Stomach (tissue), 19 donors: ENCODE measurements at regions of chr21 and their contacts with region 1.

Region 1: GRCh38 chr21:43758111-43758641 is 17.9 kb downstream of the CSTB start:
- DNase-seq: peak in 1 of 2 donors; percentile 55
- H3K4me3 ChIP-seq: peak overlapping the region in 3 of 4 donors; percentile 7 to 23 (median 23)
- H3K27ac ChIP-seq: peak overlapping the region in 4 of 5 donors; percentile 52 to 87 (median 73)
- H3K4me1 ChIP-seq: peaks cover 5 to 22% (median 14%) of the 10 kb centered on the region in 4 donors
- H3K27me3 ChIP-seq: no peaks in the 10 kb centered on the region
- CTCF ChIP-seq: no peak
- EP300 ChIP-seq: no peak
- POLR2A ChIP-seq: no peak

Region 2: DNA sequence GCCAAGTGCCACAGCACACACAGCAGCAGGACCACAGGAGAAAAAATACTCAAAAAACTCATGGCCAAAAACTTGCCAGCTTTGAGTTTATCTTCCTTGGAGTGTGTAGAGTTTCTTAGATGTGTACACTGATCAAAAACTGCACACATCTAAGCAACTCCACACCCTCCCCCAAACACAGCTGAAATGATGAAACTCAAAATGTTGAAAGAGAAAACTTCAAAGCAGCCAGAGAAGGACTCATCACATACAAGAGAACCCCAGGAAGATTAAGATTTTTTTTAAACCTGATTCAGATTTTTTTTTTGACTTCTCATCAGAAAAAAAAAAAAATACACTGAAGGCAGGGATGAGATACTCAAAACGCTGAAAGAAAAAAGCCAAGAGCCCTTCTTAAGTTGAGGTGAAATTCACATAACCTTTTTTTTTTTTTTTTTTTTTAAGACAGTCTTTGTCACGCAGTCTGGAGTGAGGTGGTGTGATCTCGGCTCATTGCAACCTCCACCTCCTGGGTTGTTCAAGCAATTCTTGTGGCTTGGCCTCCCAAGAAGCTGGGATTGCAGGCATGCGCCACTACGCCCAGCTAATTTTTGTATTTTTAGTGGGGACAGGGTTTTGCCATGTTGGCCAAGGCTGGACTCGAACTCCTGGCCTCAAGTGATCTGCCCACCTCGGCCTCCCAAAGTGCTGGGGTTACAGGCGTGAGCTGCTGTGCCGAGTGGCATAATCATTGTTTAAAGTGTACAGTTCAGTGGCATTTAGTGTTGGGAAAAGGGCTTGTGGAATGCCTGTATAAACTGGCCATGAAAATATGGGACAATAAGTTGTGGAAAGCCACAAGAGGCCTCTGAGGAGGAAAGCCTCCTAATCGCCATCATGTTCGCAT is 60.2 kb before region 1 on chr21:
- intact Hi-C with region 1: loop called (anchors 10 kb)
- DNase-seq: no peak
- H3K4me3 ChIP-seq: no peak overlapping the region
- H3K27ac ChIP-seq: no peak overlapping the region
- H3K4me1 ChIP-seq: peaks cover 0 to 15% (median 13%) of the 10 kb centered on the region in 4 donors
- H3K27me3 ChIP-seq: no peaks in the 10 kb centered on the region
- CTCF ChIP-seq: no peak
- EP300 ChIP-seq: no peak
- POLR2A ChIP-seq: no peak

Region 3: GRCh38 chr21:43842742-43843141 is 84.6 kb after region 1 on chr21:
- intact Hi-C with region 1: loop called (anchors 10 kb)
- DNase-seq: no peak
- H3K4me3 ChIP-seq: no peak overlapping the region
- H3K27ac ChIP-seq: peak overlapping the region in 1 of 5 donors; percentile 1
- H3K4me1 ChIP-seq: no peaks in the 10 kb centered on the region
- H3K27me3 ChIP-seq: no peaks in the 10 kb centered on the region
- CTCF ChIP-seq: no peak
- EP300 ChIP-seq: no peak
- POLR2A ChIP-seq: no peak